ENCODE measurements at regions of chr17 and their contacts with region 1.

Region 1: GRCh38 chr17:75764711-75765421 is at the start of gene GALK1:
- DNase-seq: no peak
- ATAC-seq: peak; percentile 93
- H3K4me3 ChIP-seq: peak within 1 kb of the TSS; percentile 51 to 65
- H3K27ac ChIP-seq: peak within 1 kb of the TSS; percentile 79
- H3K4me1 ChIP-seq: peaks cover 6% of the 10 kb centered on the region
- H3K27me3 ChIP-seq: no peaks in the 10 kb centered on the region
- CTCF ChIP-seq: peak; percentile 83
- total RNA-seq, gene GALK1: 35.8 TPM

Region 2: DNA sequence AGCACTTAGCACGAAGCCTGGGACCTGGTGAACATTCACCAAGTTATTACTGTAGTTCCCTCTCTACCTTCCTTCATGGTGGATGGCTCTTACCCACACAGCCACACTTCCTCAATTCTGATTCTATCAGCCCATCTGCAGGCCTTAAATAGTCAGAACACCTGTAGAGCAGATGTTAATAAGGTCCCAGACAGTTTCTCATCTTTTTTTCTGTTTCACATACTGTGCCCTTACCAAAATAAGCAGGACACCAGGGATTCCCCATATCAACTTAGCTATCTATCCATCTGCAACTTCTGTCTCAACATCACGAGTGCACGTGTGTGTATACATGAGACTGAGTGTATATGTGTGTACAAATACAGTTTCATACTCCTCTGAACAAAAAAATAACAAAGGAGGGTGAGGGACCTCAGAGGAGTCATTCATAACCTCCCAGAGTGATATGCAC is 100.7 kb before region 1 on chr17:
- CTCF ChIA-PET with region 1: no interaction called
- POLR2A ChIA-PET with region 1: interaction called, 10 read pairs
- in situ Hi-C with region 1: no loop called
- intact Hi-C with region 1: no loop called
- DNase-seq: no peak
- ATAC-seq: no peak
- H3K4me3 ChIP-seq: no peak overlapping the region
- H3K27ac ChIP-seq: no peak overlapping the region
- H3K4me1 ChIP-seq: peaks cover 22% of the 10 kb centered on the region
- H3K27me3 ChIP-seq: no peaks in the 10 kb centered on the region
- CTCF ChIP-seq: no peak

Region 3: DNA sequence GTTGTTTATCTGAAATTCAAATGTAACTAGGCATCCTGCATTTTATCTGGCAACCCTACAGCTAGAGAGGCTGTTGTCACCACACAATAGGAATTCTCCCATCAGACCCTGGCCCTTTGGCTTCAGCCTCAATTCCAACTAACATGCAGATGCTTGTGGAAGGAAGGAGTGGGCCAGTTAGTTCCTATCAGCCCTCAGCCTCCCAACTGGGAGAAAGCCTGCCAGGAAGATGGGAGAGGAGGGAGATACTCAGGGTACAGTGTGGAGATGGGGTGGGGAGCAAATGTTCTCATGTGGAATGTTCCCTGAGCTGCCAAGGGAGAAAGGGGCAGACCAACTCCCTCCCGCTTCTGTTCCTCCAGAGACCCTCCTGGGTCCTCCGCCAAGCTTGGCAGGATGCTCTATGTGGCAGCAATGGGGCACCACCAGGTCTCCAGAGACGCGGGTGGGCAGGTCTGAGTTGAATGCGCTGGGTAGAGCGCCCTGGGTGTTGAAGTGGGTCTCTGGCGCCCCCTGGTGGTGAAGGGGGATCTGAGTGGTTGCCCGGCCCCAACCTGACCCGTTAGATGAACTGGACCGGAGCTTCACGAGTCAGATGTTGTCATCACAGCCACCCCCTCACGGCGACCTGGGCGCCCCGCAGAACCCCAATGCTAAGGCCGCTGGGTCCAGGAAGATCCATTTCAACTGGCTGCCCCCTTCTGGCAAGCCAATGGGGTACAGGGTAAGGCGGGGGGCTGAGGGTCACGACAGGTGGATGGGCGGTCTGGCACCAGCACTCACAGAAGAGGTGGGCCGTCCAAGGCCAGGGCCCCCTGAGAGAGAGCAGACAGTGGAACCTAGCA is 15.1 kb before region 1 on chr17:
- CTCF ChIA-PET with region 1: interaction called, 13 read pairs
- POLR2A ChIA-PET with region 1: no interaction called
- in situ Hi-C with region 1: no loop called
- intact Hi-C with region 1: no loop called
- DNase-seq: peak; percentile 43
- ATAC-seq: peak; percentile 86
- H3K4me3 ChIP-seq: no peak overlapping the region
- H3K27ac ChIP-seq: no peak overlapping the region
- H3K4me1 ChIP-seq: peaks cover 1% of the 10 kb centered on the region; the same call in 1 of the 2 replicates
- H3K27me3 ChIP-seq: no peaks in the 10 kb centered on the region
- CTCF ChIP-seq: peak; percentile 98

Region 4: GRCh38 chr17:75779231-75779986 is 14.5 kb after region 1 on chr17:
- CTCF ChIA-PET with region 1: interaction called, 11 read pairs
- POLR2A ChIA-PET with region 1: interaction called, 11 read pairs
- in situ Hi-C with region 1: no loop called
- intact Hi-C with region 1: no loop called
- DNase-seq: peak; percentile 97
- ATAC-seq: peak; percentile 80
- H3K4me3 ChIP-seq: peak overlapping the region; percentile 94 to 95
- H3K27ac ChIP-seq: peak overlapping the region; percentile 92
- H3K4me1 ChIP-seq: peaks cover 39% of the 10 kb centered on the region
- H3K27me3 ChIP-seq: no peaks in the 10 kb centered on the region
- CTCF ChIP-seq: peak; percentile 59; the same call in 1 of the 2 replicates

Region 5: GRCh38 chr17:75806886-75807500 is 42.1 kb after region 1 on chr17:
- CTCF ChIA-PET with region 1: no interaction called
- POLR2A ChIA-PET with region 1: interaction called, 16 read pairs
- in situ Hi-C with region 1: no loop called
- intact Hi-C with region 1: no loop called
- DNase-seq: no peak
- ATAC-seq: 0 out of 2 replicates have a peak, but pooled peaks have one; percentile 21
- H3K4me3 ChIP-seq: no peak overlapping the region
- H3K27ac ChIP-seq: no peak overlapping the region
- H3K4me1 ChIP-seq: no peaks in the 10 kb centered on the region
- H3K27me3 ChIP-seq: no peaks in the 10 kb centered on the region
- CTCF ChIP-seq: no peak

Region 6: GRCh38 chr17:75914643-75915267 is 149.9 kb after region 1 on chr17:
- CTCF ChIA-PET with region 1: no interaction called
- POLR2A ChIA-PET with region 1: no interaction called
- in situ Hi-C with region 1: no loop called
- intact Hi-C with region 1: no loop called
- DNase-seq: no peak
- ATAC-seq: no peak
- H3K4me3 ChIP-seq: no peak overlapping the region
- H3K27ac ChIP-seq: no peak overlapping the region
- H3K4me1 ChIP-seq: no peaks in the 10 kb centered on the region
- H3K27me3 ChIP-seq: no peaks in the 10 kb centered on the region
- CTCF ChIP-seq: no peak

Measured in Panc1 (cell line).